Mammary epithelial cell (primary cell): ENCODE measurements at regions of chr22 and their contacts with region 1.

Region 1: DNA sequence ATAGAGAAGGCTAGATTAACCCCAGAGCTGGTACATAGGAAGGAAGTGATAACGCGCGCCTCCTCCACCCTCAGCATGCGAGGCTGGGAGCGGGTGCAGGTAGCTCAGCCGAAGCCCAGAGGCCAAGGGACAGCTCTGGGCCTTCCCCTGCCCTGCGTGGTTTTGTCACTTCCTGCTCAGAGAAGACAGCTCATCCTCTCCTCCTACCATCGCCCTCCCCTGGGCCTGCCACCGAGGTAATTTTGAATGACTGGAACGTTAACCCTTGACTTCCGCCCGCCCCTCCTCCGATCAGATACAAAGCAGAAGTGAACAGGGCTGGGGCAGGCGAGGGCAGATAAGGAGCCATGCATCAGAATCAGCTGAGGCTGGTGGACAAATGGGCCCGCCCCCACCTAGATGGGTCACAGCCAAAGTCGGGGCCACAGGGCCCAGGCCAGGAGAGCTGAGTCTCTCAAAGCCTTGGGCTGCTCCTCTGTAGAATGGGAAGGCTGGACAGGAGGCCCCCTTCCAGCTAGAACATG is 1.6 kb downstream of the RAC2 start:
- DNase-seq: peak; percentile 46
- H3K4me3 ChIP-seq: peak overlapping the region; percentile 25 to 83 (median 60)
- H3K27ac ChIP-seq: peak overlapping the region; percentile 2
- H3K4me1 ChIP-seq: peaks cover 25% of the 10 kb centered on the region
- H3K27me3 ChIP-seq: no peaks in the 10 kb centered on the region
- CTCF ChIP-seq: no peak

Region 2: GRCh38 chr22:37229805-37230672 is 12.4 kb before region 1 on chr22:
- CTCF ChIA-PET with region 1: no interaction called
- dilution Hi-C with region 1: no loop called
- in situ Hi-C with region 1: no loop called
- intact Hi-C with region 1: loop called (anchors 1 kb)
- DNase-seq: peak; percentile 55
- H3K4me3 ChIP-seq: no peak overlapping the region
- H3K27ac ChIP-seq: peak overlapping the region; percentile 53
- H3K4me1 ChIP-seq: peaks cover 44% of the 10 kb centered on the region
- H3K27me3 ChIP-seq: no peaks in the 10 kb centered on the region
- CTCF ChIP-seq: no peak

Region 3: GRCh38 chr22:37254209-37254866 is 11.9 kb after region 1 on chr22:
- CTCF ChIA-PET with region 1: interaction called, 17 read pairs
- dilution Hi-C with region 1: no loop called
- in situ Hi-C with region 1: no loop called
- intact Hi-C with region 1: no loop called
- DNase-seq: peak; percentile 76
- H3K4me3 ChIP-seq: peak overlapping the region in 2 of 3 experiments; percentile 12 to 46
- H3K27ac ChIP-seq: peak overlapping the region; percentile 99
- H3K4me1 ChIP-seq: peaks cover 45% of the 10 kb centered on the region
- H3K27me3 ChIP-seq: no peaks in the 10 kb centered on the region
- CTCF ChIP-seq: no peak

Region 4: DNA sequence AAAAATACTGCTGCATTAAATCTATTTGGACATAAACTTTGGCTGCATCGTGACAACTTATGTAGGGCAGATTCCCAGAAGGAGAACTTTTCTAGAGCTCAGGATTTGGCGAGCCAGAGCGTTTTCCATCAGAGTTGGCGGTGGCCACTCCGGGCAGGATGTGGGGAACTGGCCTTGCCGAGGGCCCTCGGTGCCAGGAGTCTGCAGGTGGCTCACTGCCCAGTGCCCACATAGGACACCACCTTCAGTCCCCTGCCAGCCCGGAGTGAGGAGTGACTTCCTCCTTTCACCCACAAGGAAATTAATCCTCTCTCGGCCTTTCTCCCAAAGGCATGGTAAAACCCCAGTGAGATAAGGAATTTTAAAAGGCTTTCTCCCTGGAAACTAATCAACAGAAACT is 339.0 kb after region 1 on chr22:
- CTCF ChIA-PET with region 1: no interaction called
- dilution Hi-C with region 1: no loop called
- in situ Hi-C with region 1: no loop called
- intact Hi-C with region 1: no loop called
- DNase-seq: no peak
- H3K4me3 ChIP-seq: no peak overlapping the region
- H3K27ac ChIP-seq: no peak overlapping the region
- H3K4me1 ChIP-seq: peaks cover 3% of the 10 kb centered on the region
- H3K27me3 ChIP-seq: peaks cover 1% of the 10 kb centered on the region
- CTCF ChIP-seq: no peak